AG04450 (cell line): ENCODE measurements at regions of chr1 and their contacts with region 1.

Region 1: GRCh38 chr1:241998412-241998921 is 431 bp downstream of the MAP1LC3C start:
- DNase-seq: peak; percentile 38
- H3K4me3 ChIP-seq: peak overlapping the region; percentile 54
- H3K27ac ChIP-seq: no peak overlapping the region
- H3K27me3 ChIP-seq: no peaks in the 10 kb centered on the region
- CTCF ChIP-seq: peak; percentile 75

Region 2: GRCh38 chr1:241531195-241532161 is 467.0 kb before region 1 on chr1:
- CTCF ChIA-PET with region 1: interaction called, 10 read pairs
- POLR2A ChIA-PET with region 1: no interaction called
- DNase-seq: peak; percentile 33
- H3K4me3 ChIP-seq: peak overlapping the region; percentile 59
- H3K27ac ChIP-seq: no peak overlapping the region
- H3K27me3 ChIP-seq: peaks cover 10% of the 10 kb centered on the region
- CTCF ChIP-seq: peak; percentile 59

Region 3: DNA sequence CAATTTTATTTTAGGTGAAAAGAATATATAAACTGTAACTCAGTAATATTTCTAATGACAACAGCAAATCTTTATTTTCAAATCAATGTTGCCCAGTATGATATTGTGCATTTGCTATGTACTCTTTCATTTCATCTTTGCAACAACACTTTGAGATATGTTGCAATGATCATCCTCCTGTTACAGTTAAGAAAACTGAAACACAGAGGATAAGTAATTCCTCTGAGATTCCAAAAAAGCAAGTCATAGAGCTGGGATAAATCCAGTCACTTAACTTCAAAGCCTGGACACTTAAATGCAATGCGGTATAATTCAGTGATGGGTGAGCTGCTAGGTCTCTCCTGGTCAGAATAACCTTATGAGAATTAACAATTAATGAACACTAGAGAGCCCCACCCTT is 199.1 kb before region 1 on chr1:
- CTCF ChIA-PET with region 1: no interaction called
- POLR2A ChIA-PET with region 1: no interaction called
- DNase-seq: peak; percentile 20
- H3K4me3 ChIP-seq: no peak overlapping the region
- H3K27ac ChIP-seq: no peak overlapping the region
- H3K27me3 ChIP-seq: no peaks in the 10 kb centered on the region
- CTCF ChIP-seq: no peak

Region 4: DNA sequence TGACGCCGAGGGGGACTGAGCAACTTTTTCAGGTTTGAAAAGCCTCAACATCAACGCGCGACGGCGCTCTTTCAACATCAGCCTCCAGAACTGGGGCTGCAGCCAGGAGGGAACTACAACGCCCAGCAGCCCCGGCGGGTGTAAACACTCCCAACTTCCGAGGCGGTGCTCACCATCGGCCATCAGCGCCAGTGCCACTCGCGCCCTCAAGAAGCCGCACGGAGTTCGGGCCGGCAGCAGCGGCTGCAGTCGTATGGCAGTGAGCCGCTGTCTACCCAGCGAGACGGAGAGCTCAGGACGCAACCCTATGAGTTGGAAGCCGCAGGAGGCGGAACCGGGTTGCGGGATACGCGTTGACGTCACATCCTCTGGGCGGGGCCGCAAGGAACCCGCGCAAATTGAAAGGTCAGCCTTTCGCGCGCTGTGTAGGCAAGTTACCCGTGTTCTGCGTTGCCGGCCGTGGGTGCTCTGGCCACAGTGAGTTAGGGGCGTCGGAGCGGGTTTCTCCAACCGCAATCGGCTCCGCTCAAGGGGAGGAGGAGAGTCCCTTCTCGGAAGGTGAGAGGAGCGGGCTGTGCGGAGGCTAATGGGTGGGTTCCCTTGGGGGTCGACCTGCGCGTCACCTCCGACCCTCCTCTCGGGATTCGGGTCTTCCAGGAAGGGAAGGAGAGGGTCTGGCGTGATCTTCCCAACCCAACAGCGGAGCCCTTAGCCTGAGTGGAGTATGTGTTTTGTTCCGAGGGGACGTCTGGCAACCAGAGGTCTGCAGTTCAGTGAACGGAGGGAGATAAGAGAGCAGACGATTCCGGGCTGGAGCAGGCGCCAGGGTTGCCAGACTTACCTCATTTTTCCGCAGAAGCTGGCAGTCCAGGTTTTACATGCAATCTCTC is 150.4 kb before region 1 on chr1 and contains the start of gene EXO1:
- CTCF ChIA-PET with region 1: interaction called, 10 read pairs
- POLR2A ChIA-PET with region 1: no interaction called
- DNase-seq: peak; percentile 69
- H3K4me3 ChIP-seq: peak within 1 kb of the TSS; percentile 90
- H3K27ac ChIP-seq: peak within 1 kb of the TSS; percentile 100
- H3K27me3 ChIP-seq: no peaks in the 10 kb centered on the region
- CTCF ChIP-seq: peak; percentile 37
- polyA plus RNA-seq, gene EXO1: 2.9 and 4.3 TPM in 2 replicates

Region 5: DNA sequence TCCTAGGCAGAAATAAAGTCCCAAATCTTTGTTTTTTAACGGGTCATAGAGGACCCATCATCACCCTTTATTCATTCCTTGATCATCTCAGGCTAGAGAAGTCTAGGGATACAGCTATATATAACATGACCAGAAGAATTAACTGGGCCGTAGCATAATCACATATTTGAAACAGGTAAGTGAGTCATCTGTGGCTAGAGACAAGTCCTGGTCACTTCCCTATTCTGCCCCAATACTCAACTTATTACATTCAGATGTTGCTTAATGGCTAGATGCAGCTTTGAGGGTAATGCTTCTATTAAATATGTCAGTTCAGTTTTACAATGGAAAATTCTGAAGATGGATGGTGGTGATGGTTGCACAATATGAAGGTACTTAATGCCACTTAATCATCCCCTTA is 103.5 kb before region 1 on chr1:
- CTCF ChIA-PET with region 1: interaction called, 10 read pairs
- POLR2A ChIA-PET with region 1: no interaction called
- DNase-seq: no peak
- H3K4me3 ChIP-seq: no peak overlapping the region
- H3K27ac ChIP-seq: no peak overlapping the region
- H3K27me3 ChIP-seq: no peaks in the 10 kb centered on the region
- CTCF ChIP-seq: no peak

Region 6: DNA sequence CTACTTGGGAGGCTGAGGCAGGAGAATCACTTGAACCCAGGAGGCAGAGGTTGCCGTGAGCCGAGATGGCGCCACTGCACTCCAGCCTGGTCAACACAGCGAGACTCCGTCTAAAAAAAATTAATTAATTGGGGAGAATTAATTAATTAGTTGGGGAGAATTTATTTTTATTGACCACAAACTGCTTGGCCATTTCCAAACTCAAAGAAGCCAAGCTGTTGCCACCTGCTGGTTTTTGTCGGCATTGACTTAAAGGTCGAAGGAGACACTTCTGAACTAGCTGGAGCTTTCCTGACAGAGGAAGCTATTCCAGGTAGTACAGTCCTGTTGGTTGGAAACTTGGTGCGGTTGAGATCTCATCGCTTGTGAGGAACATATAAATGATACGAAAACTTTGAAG is 12.7 kb before region 1 on chr1:
- CTCF ChIA-PET with region 1: interaction called, 21 read pairs
- POLR2A ChIA-PET with region 1: no interaction called
- DNase-seq: no peak
- H3K4me3 ChIP-seq: no peak overlapping the region
- H3K27ac ChIP-seq: no peak overlapping the region
- H3K27me3 ChIP-seq: no peaks in the 10 kb centered on the region
- CTCF ChIP-seq: peak; percentile 58